ENCODE measurements at regions of chr11 and their contacts with region 1.

Region 1: DNA sequence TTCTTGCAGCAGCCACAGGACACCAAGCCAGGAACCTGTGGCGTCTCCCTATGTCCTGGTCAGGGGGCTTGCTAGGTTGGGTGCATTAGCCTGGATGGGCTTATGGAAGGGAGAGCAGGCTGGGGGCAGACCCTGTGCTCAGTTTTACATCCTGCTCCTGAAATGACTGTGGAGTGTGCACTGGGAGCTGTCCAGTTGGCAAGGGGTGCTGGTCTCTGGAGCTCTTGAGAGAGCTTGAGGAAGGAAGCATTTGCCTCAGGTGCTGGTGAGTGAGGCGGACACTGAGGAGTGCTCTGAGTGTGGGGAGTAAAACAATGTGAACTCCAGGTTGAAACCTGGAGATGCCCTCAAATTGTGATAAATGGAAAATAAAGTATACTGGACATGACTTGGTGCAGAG is 3.4 kb downstream of the SCGB1D4 start:
- DNase-seq: no peak
- H3K4me3 ChIP-seq: no peak overlapping the region
- CTCF ChIP-seq: no peak

Region 2: DNA sequence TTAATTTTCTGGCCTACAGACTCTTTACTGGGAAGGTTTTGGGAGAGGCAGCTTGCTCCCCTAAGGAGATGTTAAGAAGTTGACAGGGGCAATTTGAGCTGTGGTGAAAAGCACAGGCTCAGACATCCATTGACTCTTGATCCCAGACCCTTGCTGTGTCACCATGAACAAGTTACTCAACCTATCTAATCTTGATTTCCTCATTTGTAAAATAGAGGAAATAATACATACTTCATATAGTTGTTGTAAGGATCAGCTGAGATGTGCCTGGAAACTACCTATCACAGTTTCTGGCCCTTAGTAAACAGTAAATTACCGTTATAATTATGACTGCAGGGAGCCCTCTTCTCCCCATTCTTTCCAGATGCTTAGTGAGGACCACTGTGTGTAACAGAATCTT is 19.9 kb after region 1 on chr11:
- CTCF ChIA-PET with region 1: interaction called, 10 read pairs
- POLR2A ChIA-PET with region 1: no interaction called
- DNase-seq: no peak
- H3K4me3 ChIP-seq: no peak overlapping the region
- CTCF ChIP-seq: no peak

Measured in AG04449 (cell line).